ENCODE measurements at regions of chr14 and their contacts with region 1.

Region 1: GRCh38 chr14:36713960-36714703 is 52.5 kb downstream of the PAX9 start:
- DNase-seq: no peak
- H3K4me3 ChIP-seq: no peak overlapping the region
- H3K27ac ChIP-seq: no peak overlapping the region
- H3K4me1 ChIP-seq: no peaks in the 10 kb centered on the region
- H3K27me3 ChIP-seq: no peaks in the 10 kb centered on the region
- CTCF ChIP-seq: no peak

Region 2: DNA sequence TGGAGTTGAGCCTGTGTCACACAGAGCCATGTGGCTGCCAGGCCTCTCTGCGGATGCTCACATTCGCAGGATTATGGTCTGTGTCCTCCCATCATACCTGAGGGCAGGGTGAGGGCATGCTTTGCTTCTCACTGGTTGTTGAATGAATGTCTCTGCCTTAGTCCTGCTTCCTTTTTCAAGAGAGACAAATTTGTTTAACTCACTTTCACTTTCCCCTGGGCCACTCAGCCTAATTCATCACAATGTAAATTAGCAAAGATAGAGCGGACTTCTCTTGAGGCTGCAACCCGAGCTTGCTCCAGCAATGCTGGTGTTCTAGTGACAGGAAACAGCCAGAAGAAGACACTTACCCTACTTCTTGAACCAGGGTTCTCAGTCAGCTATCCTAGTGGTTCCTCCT is 88.0 kb before region 1 on chr14:
- CTCF ChIA-PET with region 1: no interaction called
- dilution Hi-C with region 1: loop called (anchors 5 kb)
- in situ Hi-C with region 1: no loop called
- intact Hi-C with region 1: no loop called
- DNase-seq: no peak
- H3K4me3 ChIP-seq: no peak overlapping the region
- H3K27ac ChIP-seq: no peak overlapping the region
- H3K4me1 ChIP-seq: no peaks in the 10 kb centered on the region
- H3K27me3 ChIP-seq: peaks cover 1% of the 10 kb centered on the region
- CTCF ChIP-seq: no peak

Region 3: GRCh38 chr14:36805131-36805559 is 91.0 kb after region 1 on chr14:
- CTCF ChIA-PET with region 1: no interaction called
- dilution Hi-C with region 1: no loop called
- in situ Hi-C with region 1: no loop called
- intact Hi-C with region 1: no loop called
- DNase-seq: no peak
- H3K4me3 ChIP-seq: no peak overlapping the region
- H3K27ac ChIP-seq: no peak overlapping the region
- H3K4me1 ChIP-seq: peaks cover 3% of the 10 kb centered on the region
- H3K27me3 ChIP-seq: no peaks in the 10 kb centered on the region
- CTCF ChIP-seq: no peak

Region 4: DNA sequence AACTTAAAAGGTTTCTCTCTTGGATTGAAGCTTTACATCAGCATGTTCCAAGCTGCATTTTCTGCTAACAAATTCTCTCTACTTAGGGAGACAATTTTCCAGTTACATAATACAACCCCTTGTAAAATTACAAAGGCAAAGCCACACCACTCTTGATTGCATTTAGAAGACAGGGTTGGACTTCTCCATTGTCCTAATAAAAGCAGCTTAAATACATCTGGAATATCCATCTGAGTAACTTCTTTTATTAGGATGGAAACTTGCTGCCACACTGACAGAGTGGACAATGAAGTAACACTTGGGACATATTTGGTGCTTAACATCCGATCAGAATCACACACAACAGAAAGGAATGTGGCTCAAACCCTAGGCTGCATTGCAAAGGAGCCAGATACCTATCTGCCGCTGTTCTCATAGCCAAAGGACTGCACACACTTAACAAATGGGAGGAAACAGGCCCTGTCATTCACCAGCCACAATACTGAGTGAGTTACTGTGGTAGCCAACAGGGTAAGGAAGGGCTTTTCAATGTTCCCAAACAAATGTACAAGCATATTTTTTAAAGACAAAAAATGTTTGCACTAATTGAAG is 104.8 kb after region 1 on chr14:
- CTCF ChIA-PET with region 1: no interaction called
- dilution Hi-C with region 1: no loop called
- in situ Hi-C with region 1: no loop called
- intact Hi-C with region 1: no loop called
- DNase-seq: peak; percentile 21
- H3K4me3 ChIP-seq: no peak overlapping the region
- H3K27ac ChIP-seq: no peak overlapping the region
- H3K4me1 ChIP-seq: peaks cover 22% of the 10 kb centered on the region
- H3K27me3 ChIP-seq: no peaks in the 10 kb centered on the region
- CTCF ChIP-seq: no peak

Region 5: GRCh38 chr14:36975835-36976234 is 261.7 kb after region 1 on chr14:
- CTCF ChIA-PET with region 1: no interaction called
- dilution Hi-C with region 1: no loop called
- in situ Hi-C with region 1: no loop called
- intact Hi-C with region 1: no loop called
- DNase-seq: peak; percentile 19
- H3K4me3 ChIP-seq: no peak overlapping the region
- H3K27ac ChIP-seq: no peak overlapping the region
- H3K4me1 ChIP-seq: peaks cover 33% of the 10 kb centered on the region
- H3K27me3 ChIP-seq: no peaks in the 10 kb centered on the region
- CTCF ChIP-seq: peak in 1 of 2 donors; percentile 12

Measured in mammary epithelial cell (primary cell).